ENCODE measurements at regions of chr1 and their contacts with region 1.

Region 1: DNA sequence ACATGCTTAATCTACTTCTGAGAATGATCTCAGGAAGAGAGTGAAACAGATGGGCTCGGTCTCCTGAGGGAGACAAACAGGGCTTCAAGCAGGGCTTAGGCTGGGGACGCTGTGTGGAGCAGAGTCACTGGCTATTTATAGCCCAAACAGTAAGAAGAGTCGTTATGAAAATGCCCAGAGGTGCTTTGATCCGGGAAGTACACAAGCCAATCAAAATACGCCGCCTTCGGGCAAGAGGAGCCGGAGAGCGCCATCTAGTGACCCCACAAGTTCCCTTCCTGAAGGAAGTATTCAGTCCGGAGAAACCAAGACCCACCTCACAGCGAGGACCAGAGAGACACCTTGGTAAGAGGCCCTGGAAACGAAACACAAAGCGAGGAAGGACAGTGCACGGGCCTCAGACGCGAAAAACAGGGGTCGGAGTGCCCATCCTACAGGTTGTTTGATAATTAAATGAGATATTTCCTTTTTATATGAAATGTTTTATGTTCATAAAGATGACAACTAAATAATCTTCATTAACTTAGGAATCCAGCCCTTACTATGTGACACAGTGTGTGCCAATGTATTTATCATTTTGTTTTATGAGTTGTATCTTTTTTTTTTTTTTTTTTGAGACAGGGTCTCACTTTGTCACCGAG is 25.0 kb upstream of the SCCPDH start:
- DNase-seq: peak; percentile 71
- H3K4me3 Mint-ChIP-seq: no peak overlapping the region
- H3K27ac Mint-ChIP-seq: no peak overlapping the region
- H3K4me1 Mint-ChIP-seq: peaks cover 6% of the 10 kb centered on the region
- H3K27me3 Mint-ChIP-seq: peaks cover 2% of the 10 kb centered on the region

Region 2: GRCh38 chr1:245953876-245954660 is 745.1 kb before region 1 on chr1:
- intact Hi-C with region 1: loop called (anchors 5 kb)
- DNase-seq: no peak
- H3K4me3 Mint-ChIP-seq: peak overlapping the region; percentile 75
- H3K27ac Mint-ChIP-seq: peak overlapping the region; percentile 88
- H3K4me1 Mint-ChIP-seq: peaks cover 26% of the 10 kb centered on the region
- H3K27me3 Mint-ChIP-seq: no peaks in the 10 kb centered on the region

Region 3: GRCh38 chr1:246012341-246012740 is 686.9 kb before region 1 on chr1:
- intact Hi-C with region 1: loop called (anchors 5 kb)
- DNase-seq: peak; percentile 1
- H3K4me3 Mint-ChIP-seq: no peak overlapping the region
- H3K27ac Mint-ChIP-seq: no peak overlapping the region
- H3K4me1 Mint-ChIP-seq: no peaks in the 10 kb centered on the region
- H3K27me3 Mint-ChIP-seq: no peaks in the 10 kb centered on the region

Region 4: GRCh38 chr1:246497331-246497915 is 201.8 kb before region 1 on chr1:
- intact Hi-C with region 1: loop called (anchors 1 kb)
- DNase-seq: no peak
- H3K4me3 Mint-ChIP-seq: no peak overlapping the region
- H3K27ac Mint-ChIP-seq: peak overlapping the region; percentile 26
- H3K4me1 Mint-ChIP-seq: peaks cover 11% of the 10 kb centered on the region
- H3K27me3 Mint-ChIP-seq: no peaks in the 10 kb centered on the region

Region 5: DNA sequence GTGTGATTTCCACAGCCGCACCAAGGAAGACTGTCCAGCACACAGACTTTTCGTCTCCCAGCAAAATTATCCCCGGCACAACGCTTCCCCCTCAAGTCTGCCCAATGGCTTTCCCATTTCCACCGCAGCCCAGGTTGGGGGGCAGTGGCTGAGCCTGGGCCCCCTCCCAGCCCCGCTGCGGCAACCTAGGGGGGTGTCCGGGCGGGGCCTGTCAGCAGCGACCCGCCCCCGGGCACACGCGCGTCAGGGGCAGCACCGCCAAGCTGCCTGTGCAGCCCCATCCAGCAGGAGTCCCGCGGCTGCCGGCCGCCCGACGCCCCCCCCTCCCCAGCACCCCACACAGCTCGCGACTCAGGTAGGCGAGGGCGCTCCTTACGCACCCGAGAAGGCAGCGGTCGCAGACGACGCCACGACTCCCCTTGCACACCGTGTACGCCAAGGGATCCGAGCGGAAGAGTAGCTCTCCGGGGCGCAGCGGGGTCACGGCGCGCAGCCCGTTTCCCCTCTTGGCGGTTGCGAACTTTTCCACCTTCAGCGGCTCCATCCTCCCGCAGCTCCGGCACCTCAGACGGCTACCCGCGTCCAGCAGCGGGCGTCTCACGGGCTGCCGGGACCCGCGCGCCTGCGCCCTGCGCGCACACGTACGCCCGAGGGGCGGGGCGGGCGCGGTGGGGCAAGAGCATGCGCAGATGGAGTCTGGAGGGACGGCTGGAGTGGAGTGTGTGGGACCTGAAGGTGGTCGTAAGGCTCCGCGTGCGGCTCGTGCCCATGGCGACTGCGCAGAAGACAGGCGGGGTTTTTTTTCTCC is 192.3 kb before region 1 on chr1 and contains the start of gene SMYD3:
- intact Hi-C with region 1: loop called (anchors 1 kb)
- DNase-seq: peak; percentile 71
- H3K4me3 Mint-ChIP-seq: peak within 1 kb of the TSS; percentile 97
- H3K27ac Mint-ChIP-seq: peak within 1 kb of the TSS; percentile 84
- H3K4me1 Mint-ChIP-seq: peaks cover 26% of the 10 kb centered on the region
- H3K27me3 Mint-ChIP-seq: no peaks in the 10 kb centered on the region
- total RNA-seq, gene SMYD3: 21.7 and 21.8 TPM in 2 replicates

Region 6: GRCh38 chr1:246661457-246661856 is 37.8 kb before region 1 on chr1:
- intact Hi-C with region 1: no loop called
- DNase-seq: no peak
- H3K4me3 Mint-ChIP-seq: no peak overlapping the region
- H3K27ac Mint-ChIP-seq: no peak overlapping the region
- H3K4me1 Mint-ChIP-seq: no peaks in the 10 kb centered on the region
- H3K27me3 Mint-ChIP-seq: no peaks in the 10 kb centered on the region

Region 7: DNA sequence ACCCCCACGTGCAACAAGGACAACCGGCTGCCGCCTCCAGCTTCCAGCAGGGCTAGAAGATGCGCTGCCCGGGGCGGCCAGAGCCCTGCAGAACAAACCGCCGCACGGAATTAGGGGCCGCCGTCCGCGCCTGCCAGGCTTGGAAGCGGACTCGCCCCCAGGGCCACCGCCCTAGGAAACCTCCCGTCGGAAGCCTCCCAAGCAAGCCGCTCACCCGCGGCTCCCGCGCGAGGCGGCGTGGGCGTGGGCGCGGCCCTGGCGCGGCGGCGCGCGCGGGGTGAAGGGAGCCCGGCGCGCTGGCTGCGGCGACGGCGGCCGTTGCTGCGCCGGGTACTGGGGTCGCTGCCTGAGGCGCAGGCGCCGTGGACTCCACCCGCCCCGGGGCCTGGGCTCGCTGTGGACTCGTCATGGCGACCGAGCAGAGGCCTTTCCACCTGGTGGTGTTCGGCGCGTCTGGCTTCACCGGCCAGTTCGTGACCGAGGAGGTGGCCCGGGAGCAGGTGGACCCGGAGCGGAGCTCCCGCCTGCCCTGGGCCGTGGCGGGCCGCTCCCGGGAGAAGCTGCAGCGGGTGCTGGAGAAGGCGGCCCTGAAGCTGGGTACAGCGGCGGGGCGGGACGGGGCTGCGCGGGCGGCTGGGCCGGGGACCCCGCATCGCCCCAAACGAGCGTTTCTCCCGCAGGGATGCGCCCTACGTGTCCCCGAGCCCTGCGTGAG is 25.0 kb after region 1 on chr1 and contains the start of gene SCCPDH:
- intact Hi-C with region 1: loop called (anchors 1 kb)
- DNase-seq: peak; percentile 55
- H3K4me3 Mint-ChIP-seq: peak within 1 kb of the TSS; percentile 92
- H3K27ac Mint-ChIP-seq: peak within 1 kb of the TSS; percentile 78
- H3K4me1 Mint-ChIP-seq: peaks cover 10% of the 10 kb centered on the region
- H3K27me3 Mint-ChIP-seq: peaks cover 6% of the 10 kb centered on the region
- total RNA-seq, gene SCCPDH: 23.5 and 24.3 TPM in 2 replicates

Region 8: DNA sequence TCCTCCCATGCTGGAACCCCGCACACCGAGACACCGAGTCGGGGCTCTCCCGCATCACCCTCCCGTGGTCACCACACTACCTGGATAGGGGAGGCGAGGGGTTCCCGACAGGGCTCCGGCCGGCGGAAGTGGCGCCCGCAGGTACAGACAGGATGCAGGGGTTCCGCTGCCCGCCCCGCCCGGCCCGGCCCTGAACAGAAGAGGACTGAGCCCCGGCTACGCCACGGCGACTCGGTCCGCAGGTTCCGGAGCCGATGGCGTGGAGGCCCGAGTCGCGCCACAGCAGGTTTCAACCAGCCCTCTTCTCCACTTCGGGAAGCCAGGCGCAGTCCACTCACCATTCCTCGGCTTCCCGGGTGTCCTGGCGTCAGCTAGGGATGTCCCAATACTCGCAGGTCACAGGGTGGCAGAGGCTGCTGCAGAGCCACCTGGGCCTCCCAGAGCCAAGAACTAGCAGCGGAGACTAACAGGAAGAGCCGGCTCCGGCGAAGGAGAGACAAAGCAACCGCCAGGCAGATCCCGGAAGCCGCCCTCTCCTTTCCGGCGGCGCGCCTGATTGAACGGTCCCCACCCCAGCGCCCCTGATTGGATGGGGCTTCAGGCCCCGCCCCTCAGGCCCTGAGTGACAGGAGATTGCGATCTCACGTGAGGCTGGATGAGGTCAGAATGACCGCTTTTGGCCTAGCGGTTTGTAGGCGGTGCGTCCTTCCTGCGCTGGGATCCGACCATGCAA is 404.8 kb after region 1 on chr1 and contains the start of gene ZNF669:
- intact Hi-C with region 1: loop called (anchors 1 kb)
- DNase-seq: peak; percentile 86
- H3K4me3 Mint-ChIP-seq: peak within 1 kb of the TSS; percentile 91
- H3K27ac Mint-ChIP-seq: peak within 1 kb of the TSS; percentile 74
- H3K4me1 Mint-ChIP-seq: peaks cover 15% of the 10 kb centered on the region
- H3K27me3 Mint-ChIP-seq: peaks cover 14% of the 10 kb centered on the region
- total RNA-seq, gene ZNF669: 8.0 and 9.5 TPM in 2 replicates